ENCODE measurements at regions of chr15 and their contacts with region 1.

Region 1: DNA sequence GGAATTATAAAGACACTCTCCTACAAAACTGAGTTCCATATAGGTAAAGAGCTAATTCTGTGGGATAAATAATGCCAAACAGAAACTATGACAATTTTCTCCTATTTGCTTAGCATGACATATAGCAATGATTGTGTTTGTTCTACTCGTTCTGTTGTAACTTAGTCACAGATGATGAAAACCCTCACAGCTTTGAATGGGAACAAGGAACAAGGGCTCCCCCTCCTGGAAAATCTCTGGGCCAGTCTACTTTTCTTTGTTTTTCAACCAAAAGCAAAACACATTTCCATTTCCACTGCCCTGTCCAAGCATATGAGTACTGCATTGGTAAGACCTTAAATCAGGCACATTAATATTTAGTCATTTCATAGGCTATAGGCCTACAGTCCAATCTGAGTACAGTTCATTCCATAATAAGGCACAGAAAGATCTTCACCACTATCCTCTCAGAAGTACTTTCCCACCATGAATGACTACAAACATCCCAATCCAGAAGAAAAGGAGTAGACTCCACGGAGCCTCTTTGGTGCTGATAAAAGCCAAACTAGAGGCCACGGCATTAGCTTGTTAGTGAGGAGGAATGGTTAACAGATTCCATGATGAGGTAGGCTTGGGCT is 67.1 kb downstream of the ATP8B4 start:
- DNase-seq: peak; percentile 76
- H3K4me3 Mint-ChIP-seq: no peak overlapping the region
- H3K27ac Mint-ChIP-seq: peak overlapping the region; percentile 54
- H3K4me1 Mint-ChIP-seq: peaks cover 39% of the 10 kb centered on the region
- H3K27me3 Mint-ChIP-seq: no peaks in the 10 kb centered on the region

Region 2: GRCh38 chr15:49876401-49877038 is 175.4 kb before region 1 on chr15:
- intact Hi-C with region 1: loop called (anchors 5 kb)
- DNase-seq: no peak
- H3K4me3 Mint-ChIP-seq: no peak overlapping the region
- H3K27ac Mint-ChIP-seq: no peak overlapping the region
- H3K4me1 Mint-ChIP-seq: no peaks in the 10 kb centered on the region
- H3K27me3 Mint-ChIP-seq: no peaks in the 10 kb centered on the region

Region 3: DNA sequence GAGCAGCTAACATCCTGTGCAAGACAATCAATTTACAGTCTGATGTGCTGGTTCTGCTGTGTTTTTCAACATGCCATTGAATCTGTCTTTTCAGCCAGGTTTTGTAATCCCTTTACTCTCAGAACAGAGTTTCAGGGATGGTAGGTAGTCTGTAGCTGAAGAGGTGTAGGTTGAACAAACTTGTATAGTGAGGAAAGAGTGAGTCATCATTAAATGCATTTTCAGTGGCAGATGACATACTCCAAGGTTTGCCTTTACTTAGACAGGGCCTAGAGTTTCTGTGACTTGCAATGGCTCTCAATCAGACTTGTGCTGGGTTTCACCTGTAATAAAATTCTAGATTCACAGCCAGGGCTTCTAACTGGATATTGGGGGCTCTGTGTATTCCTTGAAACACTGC is 1191.8 kb after region 1 on chr15:
- intact Hi-C with region 1: no loop called
- DNase-seq: no peak
- H3K4me3 Mint-ChIP-seq: no peak overlapping the region
- H3K27ac Mint-ChIP-seq: peak overlapping the region; percentile 56
- H3K4me1 Mint-ChIP-seq: peaks cover 25% of the 10 kb centered on the region
- H3K27me3 Mint-ChIP-seq: peaks cover 13% of the 10 kb centered on the region